HepG2 (cell line): ENCODE measurements at regions of chr12 and their contacts with region 1.

Region 1: GRCh38 chr12:68686595-68687521 is at the start of gene NUP107:
- DNase-seq: peak; percentile 99
- ATAC-seq: peak; percentile 98
- H3K4me3 ChIP-seq: peak within 1 kb of the TSS; percentile 75 to 93 (median 92)
- H3K27ac ChIP-seq: peak within 1 kb of the TSS; percentile 80
- H3K4me1 ChIP-seq: peaks cover 27% of the 10 kb centered on the region
- H3K27me3 ChIP-seq: no peaks in the 10 kb centered on the region; a peak in 2 of 5 replicates
- CTCF ChIP-seq: 0 out of 2 replicates have a peak, but pooled peaks have one; percentile 10
- EP300 ChIP-seq: peak in 1 of 2 experiments; percentile 43; a peak in 2 of 4 replicates
- POLR2A ChIP-seq: peak; percentile 70 to 89
- RAD21 ChIP-seq: peak; percentile 7; the same call in 1 of the 2 replicates
- total RNA-seq, gene NUP107: 100 and 125 TPM in 2 replicates

Region 2: GRCh38 chr12:68349921-68350606 is 336.8 kb before region 1 on chr12:
- CTCF ChIA-PET with region 1: no interaction called
- POLR2A ChIA-PET with region 1: no interaction called
- in situ Hi-C with region 1: loop called (anchors 10 kb)
- intact Hi-C with region 1: no loop called
- DNase-seq: no peak
- ATAC-seq: no peak
- H3K4me3 ChIP-seq: no peak overlapping the region
- H3K27ac ChIP-seq: no peak overlapping the region
- H3K4me1 ChIP-seq: peaks cover 1% of the 10 kb centered on the region
- H3K27me3 ChIP-seq: no peaks in the 10 kb centered on the region
- CTCF ChIP-seq: no peak
- EP300 ChIP-seq: no peak
- POLR2A ChIP-seq: no peak
- RAD21 ChIP-seq: no peak

Region 3: DNA sequence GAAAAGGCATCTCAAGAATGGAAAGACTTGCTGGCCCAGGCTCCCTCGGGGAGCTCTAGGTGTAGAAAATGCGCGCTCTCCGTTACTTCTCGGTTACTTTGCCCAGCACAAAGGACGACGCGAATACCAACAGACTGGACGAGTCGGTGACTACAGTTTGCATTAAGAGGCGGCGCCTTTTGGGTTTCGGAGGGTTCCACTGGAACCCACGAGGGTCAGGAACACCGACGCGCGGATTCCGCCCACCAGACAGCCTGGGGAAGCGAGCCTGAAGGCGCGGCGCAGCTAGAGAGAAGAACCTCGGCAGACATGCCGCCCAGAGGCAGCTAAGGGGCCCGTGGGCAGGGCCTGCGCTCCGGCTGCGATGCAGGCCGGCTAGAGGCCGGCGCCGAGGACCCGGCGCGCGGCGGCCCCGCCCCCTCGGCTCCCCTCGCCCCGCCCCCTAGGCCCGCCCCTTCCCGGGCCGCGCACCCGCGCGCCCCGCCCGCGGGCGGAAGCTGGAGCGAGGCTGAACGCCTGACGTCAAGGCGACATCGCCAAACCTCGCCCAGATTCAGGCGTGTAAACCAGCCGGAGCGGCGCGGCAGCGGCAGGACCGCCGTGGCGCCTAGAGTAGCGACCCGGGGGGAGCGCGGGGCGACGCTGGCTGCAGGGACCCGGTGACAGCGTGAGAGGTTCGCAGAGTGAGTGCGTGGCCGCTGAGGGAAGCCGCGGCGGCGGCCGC is 76.3 kb before region 1 on chr12 and contains the start of gene RAP1B:
- CTCF ChIA-PET with region 1: no interaction called
- POLR2A ChIA-PET with region 1: interaction called, 3 read pairs
- in situ Hi-C with region 1: no loop called
- intact Hi-C with region 1: loop called (anchors 2 kb)
- DNase-seq: peak; percentile 79
- ATAC-seq: peak; percentile 96
- H3K4me3 ChIP-seq: peak within 1 kb of the TSS; percentile 83 to 99 (median 86)
- H3K27ac ChIP-seq: peak within 1 kb of the TSS; percentile 87
- H3K4me1 ChIP-seq: peaks cover 41% of the 10 kb centered on the region
- H3K27me3 ChIP-seq: no peaks in the 10 kb centered on the region; a peak in 1 of 5 replicates
- CTCF ChIP-seq: no peak
- EP300 ChIP-seq: no peak
- POLR2A ChIP-seq: peak; percentile 92
- RAD21 ChIP-seq: no peak; the same call in none of the 2 replicates
- total RNA-seq, gene RAP1B: 92.7 and 129 TPM in 2 replicates

Region 4: GRCh38 chr12:68786929-68787328 is 100.1 kb after region 1 on chr12:
- CTCF ChIA-PET with region 1: no interaction called
- POLR2A ChIA-PET with region 1: no interaction called
- in situ Hi-C with region 1: no loop called
- intact Hi-C with region 1: loop called (anchors 1 kb)
- DNase-seq: peak; percentile 56
- ATAC-seq: peak; percentile 4; the same call in 2 of the 3 replicates
- H3K4me3 ChIP-seq: peak overlapping the region in 2 of 3 experiments; percentile 13 to 36; a peak in 1 of 6 replicates
- H3K27ac ChIP-seq: peak overlapping the region; percentile 91
- H3K4me1 ChIP-seq: peaks cover 85% of the 10 kb centered on the region
- H3K27me3 ChIP-seq: no peaks in the 10 kb centered on the region
- CTCF ChIP-seq: peak; percentile 39; the same call in 1 of the 2 replicates
- EP300 ChIP-seq: no peak
- POLR2A ChIP-seq: no peak
- RAD21 ChIP-seq: no peak